CD8-positive, alpha-beta T cell (primary cell): ENCODE measurements at regions of chr16 and their contacts with region 1.

Region 1: DNA sequence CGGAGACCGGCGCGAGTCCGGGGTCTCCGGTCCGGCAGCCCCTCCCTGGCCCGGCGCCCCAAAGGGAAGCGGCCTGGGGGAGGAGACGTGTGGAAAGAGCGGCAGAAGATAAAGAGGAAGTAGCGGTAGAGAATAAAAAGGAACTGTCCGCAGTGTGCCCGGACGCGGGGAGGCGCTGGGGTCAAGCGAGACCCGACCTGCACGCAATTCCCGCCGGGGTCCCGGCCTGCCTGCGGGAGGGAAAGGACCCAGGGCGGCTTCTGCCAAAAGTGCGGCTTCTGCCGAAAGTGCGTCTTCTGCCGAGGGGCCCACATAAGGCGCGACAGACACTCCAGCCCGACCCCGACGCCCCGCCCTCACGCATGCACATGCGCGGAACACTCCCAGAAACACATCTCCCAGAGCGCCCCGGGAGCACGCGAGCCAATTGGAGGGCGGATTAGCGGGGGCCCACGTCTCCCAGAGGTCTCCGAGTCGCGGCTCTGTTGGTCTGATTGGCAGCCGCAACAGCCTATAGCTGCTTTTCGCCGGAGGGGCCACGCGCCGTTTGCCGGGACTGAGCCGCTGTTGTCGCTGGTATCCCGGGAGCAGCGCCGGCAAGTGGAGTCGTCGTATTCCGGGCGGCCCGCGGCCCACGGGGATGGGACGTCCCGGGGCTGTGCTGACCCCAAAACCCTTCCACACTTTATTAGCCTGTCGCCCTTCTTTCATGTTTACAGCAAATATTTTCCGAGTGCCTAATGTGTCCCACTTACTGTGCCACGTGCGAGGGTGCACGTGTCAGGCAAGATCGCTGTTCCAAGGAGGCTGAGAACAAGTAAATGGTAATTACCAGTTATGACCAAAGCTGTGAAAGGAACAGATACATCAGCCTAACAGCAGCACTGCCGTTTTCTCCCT is 8.0 kb upstream of the MEFV start:
- DNase-seq: peak; percentile 95 to 99 (median 97)
- ATAC-seq: peak; percentile 88
- H3K4me3 ChIP-seq: peak overlapping the region; percentile 82 to 91
- H3K4me3 Mint-ChIP-seq: peak overlapping the region; percentile 82
- H3K27ac ChIP-seq: peak overlapping the region; percentile 96 to 98
- H3K27ac Mint-ChIP-seq: peak overlapping the region; percentile 94
- H3K4me1 ChIP-seq: peaks cover 19% of the 10 kb centered on the region
- H3K4me1 Mint-ChIP-seq: peaks cover 43% of the 10 kb centered on the region
- H3K27me3 ChIP-seq: no peaks in the 10 kb centered on the region
- H3K27me3 Mint-ChIP-seq: no peaks in the 10 kb centered on the region
- CTCF ChIP-seq: no peak

Region 2: GRCh38 chr16:3023669-3024478 is 240.5 kb before region 1 on chr16 and contains the starts of genes HCFC1R1 and THOC6:
- CTCF ChIA-PET with region 1: no interaction called
- POLR2A ChIA-PET with region 1: no interaction called
- intact Hi-C with region 1: loop called (anchors 1 to 5 kb)
- DNase-seq: peak; percentile 88 to 98 (median 96)
- ATAC-seq: peak; percentile 73
- H3K4me3 ChIP-seq: peak within 1 kb of the TSS; percentile 88 to 90
- H3K4me3 Mint-ChIP-seq: peak within 1 kb of the TSS; percentile 95
- H3K27ac ChIP-seq: peak within 1 kb of the TSS; percentile 70 to 96
- H3K27ac Mint-ChIP-seq: peak within 1 kb of the TSS; percentile 95
- H3K4me1 ChIP-seq: peaks cover 65% of the 10 kb centered on the region
- H3K4me1 Mint-ChIP-seq: peaks cover 49% of the 10 kb centered on the region
- H3K27me3 ChIP-seq: peaks cover 0 to 3% of the 10 kb centered on the region in 2 experiments
- H3K27me3 Mint-ChIP-seq: peaks cover 3% of the 10 kb centered on the region
- CTCF ChIP-seq: no peak
- total RNA-seq, gene HCFC1R1: 6.4 to 7.1 TPM
- total RNA-seq, gene THOC6: 13.1 to 14.0 TPM

Region 3: DNA sequence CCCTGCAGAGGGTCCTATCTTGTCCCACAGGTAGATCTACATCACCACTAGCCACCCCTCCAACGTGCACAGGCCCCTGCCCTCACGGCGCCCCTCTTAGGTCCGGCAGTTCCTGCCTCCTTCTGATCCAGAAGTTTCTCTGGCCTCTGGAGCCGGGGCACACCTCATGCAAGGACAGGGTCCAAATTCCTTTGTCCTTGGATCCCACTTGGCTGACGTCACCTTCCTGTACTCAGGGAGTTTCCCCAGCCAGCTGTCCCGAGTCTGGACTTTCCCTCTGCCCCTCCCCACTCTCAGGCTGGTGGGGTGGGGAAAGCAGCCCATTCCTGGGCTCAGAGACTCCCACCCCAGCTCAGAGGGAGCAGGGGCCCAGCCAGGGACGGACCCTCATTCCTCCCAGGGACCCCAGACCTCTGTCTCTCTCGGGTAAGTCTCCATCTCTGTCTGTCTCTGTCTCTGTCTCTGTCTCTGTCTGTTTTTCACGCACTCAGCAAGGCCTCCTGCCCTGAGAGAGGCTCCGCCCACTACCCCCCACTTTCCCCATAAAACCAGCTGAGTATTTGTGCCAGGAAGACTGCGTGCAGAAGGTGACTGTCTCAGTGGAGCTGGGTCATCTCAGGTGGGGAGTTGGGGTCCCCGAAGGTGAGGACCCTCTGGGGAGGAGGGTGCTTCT is 199.2 kb before region 1 on chr16 and contains the start of gene IL32:
- CTCF ChIA-PET with region 1: no interaction called
- POLR2A ChIA-PET with region 1: no interaction called
- intact Hi-C with region 1: no loop called
- DNase-seq: peak in 8 of 9 experiments; percentile 57 to 92 (median 72)
- ATAC-seq: peak; percentile 43
- H3K4me3 ChIP-seq: peak within 1 kb of the TSS; percentile 97 to 100
- H3K4me3 Mint-ChIP-seq: peak within 1 kb of the TSS; percentile 97
- H3K27ac ChIP-seq: peak within 1 kb of the TSS; percentile 82 to 100
- H3K27ac Mint-ChIP-seq: peak within 1 kb of the TSS; percentile 97
- H3K4me1 ChIP-seq: peaks cover 48% of the 10 kb centered on the region
- H3K4me1 Mint-ChIP-seq: peaks cover 58% of the 10 kb centered on the region
- H3K27me3 ChIP-seq: no peaks in the 10 kb centered on the region
- H3K27me3 Mint-ChIP-seq: no peaks in the 10 kb centered on the region
- CTCF ChIP-seq: no peak
- total RNA-seq, gene IL32: 123 to 127 TPM

Region 4: GRCh38 chr16:3182608-3183444 is 81.6 kb before region 1 on chr16:
- CTCF ChIA-PET with region 1: interaction called, 7 read pairs
- POLR2A ChIA-PET with region 1: interaction called, 7 read pairs
- intact Hi-C with region 1: loop called (anchors 2 to 5 kb)
- DNase-seq: peak in 6 of 9 experiments; percentile 38 to 74 (median 64)
- ATAC-seq: peak; percentile 64
- H3K4me3 ChIP-seq: peak overlapping the region; percentile 38 to 43
- H3K4me3 Mint-ChIP-seq: peak overlapping the region; percentile 78
- H3K27ac ChIP-seq: no peak overlapping the region
- H3K27ac Mint-ChIP-seq: peak overlapping the region; percentile 66
- H3K4me1 ChIP-seq: peaks cover 19% of the 10 kb centered on the region
- H3K4me1 Mint-ChIP-seq: peaks cover 19% of the 10 kb centered on the region
- H3K27me3 ChIP-seq: peaks cover 31 to 38% of the 10 kb centered on the region in 2 experiments
- H3K27me3 Mint-ChIP-seq: peaks cover 65% of the 10 kb centered on the region
- CTCF ChIP-seq: no peak

Region 5: GRCh38 chr16:3234543-3235541 is 29.5 kb before region 1 on chr16 and contains the start of gene ZNF200:
- CTCF ChIA-PET with region 1: interaction called, 6 read pairs
- POLR2A ChIA-PET with region 1: interaction called, 37 read pairs
- intact Hi-C with region 1: loop called (anchors 1 kb)
- DNase-seq: peak; percentile 85 to 97 (median 95)
- ATAC-seq: peak; percentile 85
- H3K4me3 ChIP-seq: peak within 1 kb of the TSS; percentile 82 to 99
- H3K4me3 Mint-ChIP-seq: peak within 1 kb of the TSS; percentile 96
- H3K27ac ChIP-seq: peak within 1 kb of the TSS; percentile 94 to 96
- H3K27ac Mint-ChIP-seq: peak within 1 kb of the TSS; percentile 98
- H3K4me1 ChIP-seq: peaks cover 21% of the 10 kb centered on the region
- H3K4me1 Mint-ChIP-seq: peaks cover 40% of the 10 kb centered on the region
- H3K27me3 ChIP-seq: no peaks in the 10 kb centered on the region
- H3K27me3 Mint-ChIP-seq: no peaks in the 10 kb centered on the region
- CTCF ChIP-seq: no peak
- total RNA-seq, gene ZNF200: 12.5 to 14.1 TPM

Region 6: DNA sequence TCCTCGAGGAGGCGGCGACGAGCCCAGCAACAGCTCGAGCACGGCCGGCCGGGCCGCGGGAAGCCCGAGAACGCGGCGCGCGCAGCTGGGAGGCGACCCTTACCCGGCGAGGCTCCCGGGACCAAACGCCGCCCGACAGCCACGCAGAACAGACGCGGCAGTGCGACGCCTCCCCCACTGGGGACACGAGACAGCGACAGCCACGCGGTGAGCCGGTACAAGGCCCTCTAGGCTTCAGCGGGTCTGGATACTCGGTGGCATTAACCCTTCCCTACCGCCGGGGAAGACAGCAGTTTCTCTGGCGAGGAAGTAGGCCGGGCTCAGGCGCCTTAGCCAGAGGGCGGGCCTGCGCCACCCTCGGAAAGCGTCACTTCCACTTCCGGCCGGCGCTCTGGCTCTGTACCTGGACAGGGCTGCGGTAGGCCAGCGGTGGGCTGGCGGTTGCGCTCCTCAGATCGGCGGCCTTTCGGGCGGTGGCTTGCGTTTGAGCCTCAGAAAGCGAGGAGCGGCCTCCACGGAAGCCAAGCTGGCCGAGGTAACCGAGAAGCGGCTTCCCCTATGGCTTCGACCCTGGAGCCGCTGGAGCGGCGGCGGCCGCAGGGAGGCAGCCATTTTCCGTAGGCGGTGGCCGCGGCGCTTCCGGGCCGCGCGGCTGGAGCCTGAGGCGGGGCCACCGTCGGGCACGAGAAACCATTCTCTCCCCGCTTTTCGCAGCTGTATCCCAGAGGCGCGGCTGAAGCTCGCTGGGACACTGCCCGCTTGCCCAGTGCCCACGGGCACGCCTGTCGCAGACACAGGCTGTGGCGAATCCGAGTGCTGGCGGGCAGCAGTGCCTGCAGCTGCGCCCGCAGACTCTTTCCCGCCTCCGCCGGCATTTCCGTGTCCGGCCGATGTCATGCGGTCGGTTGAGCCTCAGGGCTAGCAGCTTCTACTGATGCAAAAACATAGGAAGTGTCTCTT is 41.0 kb after region 1 on chr16 and contains the starts of genes TIGD7 and ZNF75A:
- CTCF ChIA-PET with region 1: interaction called, 4 read pairs
- POLR2A ChIA-PET with region 1: interaction called, 15 read pairs
- intact Hi-C with region 1: loop called (anchors 1 kb)
- DNase-seq: peak; percentile 60 to 94 (median 83)
- ATAC-seq: peak; percentile 97
- H3K4me3 ChIP-seq: peak within 1 kb of the TSS; percentile 90 to 93
- H3K4me3 Mint-ChIP-seq: peak within 1 kb of the TSS; percentile 83
- H3K27ac ChIP-seq: peak within 1 kb of the TSS; percentile 86 to 91
- H3K27ac Mint-ChIP-seq: peak within 1 kb of the TSS; percentile 90
- H3K4me1 ChIP-seq: peaks cover 14% of the 10 kb centered on the region
- H3K4me1 Mint-ChIP-seq: peaks cover 30% of the 10 kb centered on the region
- H3K27me3 ChIP-seq: no peaks in the 10 kb centered on the region
- H3K27me3 Mint-ChIP-seq: no peaks in the 10 kb centered on the region
- CTCF ChIP-seq: no peak
- total RNA-seq, gene TIGD7: 4.1 to 4.2 TPM
- total RNA-seq, gene ZNF75A: 59.6 to 61.3 TPM

Region 7: DNA sequence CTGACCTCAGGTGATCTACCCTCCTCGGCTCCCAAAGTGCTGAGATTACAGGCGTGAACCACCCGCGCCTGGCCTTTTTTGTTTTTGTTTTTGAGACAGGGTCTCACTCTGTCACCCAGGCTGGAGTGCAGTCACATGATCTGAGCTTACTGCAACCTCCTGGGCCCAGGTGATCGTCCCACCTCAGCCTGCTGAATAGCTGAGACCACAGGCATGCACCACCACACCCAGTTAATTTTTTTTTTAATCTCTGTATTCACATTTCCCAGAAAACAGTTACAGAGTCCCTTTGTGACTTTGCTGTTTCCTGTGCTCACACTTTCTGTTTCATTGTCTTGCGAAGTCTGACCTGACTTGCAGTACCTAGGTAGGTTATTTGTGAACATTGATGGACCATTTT is 239.1 kb after region 1 on chr16:
- CTCF ChIA-PET with region 1: interaction called, 5 read pairs
- POLR2A ChIA-PET with region 1: no interaction called
- intact Hi-C with region 1: loop called (anchors 1 to 2 kb)
- DNase-seq: peak in 8 of 9 experiments; percentile 19 to 77 (median 64)
- ATAC-seq: peak; percentile 22
- H3K4me3 ChIP-seq: peak overlapping the region in 1 of 2 experiments; percentile 45
- H3K4me3 Mint-ChIP-seq: peak overlapping the region; percentile 71
- H3K27ac ChIP-seq: peak overlapping the region; percentile 50 to 71
- H3K27ac Mint-ChIP-seq: peak overlapping the region; percentile 96
- H3K4me1 ChIP-seq: peaks cover 59% of the 10 kb centered on the region
- H3K4me1 Mint-ChIP-seq: peaks cover 66% of the 10 kb centered on the region
- H3K27me3 ChIP-seq: no peaks in the 10 kb centered on the region
- H3K27me3 Mint-ChIP-seq: no peaks in the 10 kb centered on the region
- CTCF ChIP-seq: no peak